ENCODE measurements at regions of chr9 and their contacts with region 1.

Region 1: GRCh38 chr9:70639853-70640814 is 225.7 kb upstream of the KLF9 start:
- DNase-seq: peak in 1 of 2 donors; percentile 42
- ATAC-seq: peak in 1 of 3 donors; percentile 40
- H3K4me3 ChIP-seq: no peak overlapping the region
- H3K4me3 Mint-ChIP-seq: no peak overlapping the region
- H3K27ac ChIP-seq: no peak overlapping the region
- H3K27ac Mint-ChIP-seq: no peak overlapping the region
- H3K4me1 ChIP-seq: no peaks in the 10 kb centered on the region
- H3K4me1 Mint-ChIP-seq: no peaks in the 10 kb centered on the region
- H3K27me3 ChIP-seq: no peaks in the 10 kb centered on the region
- H3K27me3 Mint-ChIP-seq: peaks cover 3 to 10% of the 10 kb centered on the region in 2 donors
- CTCF ChIP-seq: peak; percentile 20

Region 2: DNA sequence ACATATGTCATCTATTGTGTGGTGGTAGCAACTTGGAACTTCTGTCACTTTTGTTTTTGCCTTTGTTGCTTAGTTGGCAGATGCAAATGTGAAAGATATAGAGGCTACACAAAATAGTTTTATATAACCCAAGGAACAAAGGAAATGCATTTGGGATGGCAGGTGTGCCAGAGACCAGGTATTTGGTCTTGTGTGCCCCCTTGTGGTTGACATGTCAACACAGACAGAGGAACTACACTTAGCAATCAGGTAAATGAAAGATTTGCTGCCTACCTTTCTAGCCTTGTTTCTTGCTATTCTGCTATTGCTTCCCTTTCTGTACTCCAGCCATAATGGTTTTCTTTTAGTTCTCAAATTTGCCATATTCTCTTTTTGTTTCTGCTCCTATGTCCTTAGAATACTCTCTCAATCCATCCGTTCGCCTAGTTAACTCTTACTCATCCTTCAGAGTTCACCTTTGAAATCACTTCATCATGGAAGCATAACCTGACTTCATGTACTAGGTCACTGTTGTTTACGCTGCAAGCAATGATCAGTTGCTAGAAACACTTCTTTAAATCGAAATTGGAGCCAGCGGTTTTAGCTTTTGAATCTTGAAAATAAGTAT is 361.7 kb after region 1 on chr9:
- intact Hi-C with region 1: loop called (anchors 5 kb)
- DNase-seq: peak in 1 of 2 donors; percentile 13
- ATAC-seq: no peak
- H3K4me3 ChIP-seq: no peak overlapping the region
- H3K4me3 Mint-ChIP-seq: no peak overlapping the region
- H3K27ac ChIP-seq: no peak overlapping the region
- H3K27ac Mint-ChIP-seq: no peak overlapping the region
- H3K4me1 ChIP-seq: no peaks in the 10 kb centered on the region
- H3K4me1 Mint-ChIP-seq: no peaks in the 10 kb centered on the region
- H3K27me3 ChIP-seq: no peaks in the 10 kb centered on the region
- H3K27me3 Mint-ChIP-seq: no peaks in the 10 kb centered on the region
- CTCF ChIP-seq: no peak

Region 3: GRCh38 chr9:71249729-71250317 is 609.7 kb after region 1 on chr9:
- intact Hi-C with region 1: loop called (anchors 10 kb)
- DNase-seq: peak in 1 of 2 donors; percentile 17
- ATAC-seq: no peak
- H3K4me3 ChIP-seq: no peak overlapping the region
- H3K4me3 Mint-ChIP-seq: no peak overlapping the region
- H3K27ac ChIP-seq: no peak overlapping the region
- H3K27ac Mint-ChIP-seq: no peak overlapping the region
- H3K4me1 ChIP-seq: no peaks in the 10 kb centered on the region
- H3K4me1 Mint-ChIP-seq: no peaks in the 10 kb centered on the region
- H3K27me3 ChIP-seq: no peaks in the 10 kb centered on the region
- H3K27me3 Mint-ChIP-seq: peaks cover 0 to 3% of the 10 kb centered on the region in 2 donors
- CTCF ChIP-seq: no peak